MCF 10A (cell line): ENCODE measurements at regions of chr15 and their contacts with region 1.

Region 1: GRCh38 chr15:96392380-96393208 is 62.1 kb downstream of the NR2F2 start:
- DNase-seq: no peak
- H3K4me3 Mint-ChIP-seq: no peak overlapping the region
- H3K27ac Mint-ChIP-seq: no peak overlapping the region
- H3K4me1 Mint-ChIP-seq: no peaks in the 10 kb centered on the region
- H3K27me3 Mint-ChIP-seq: peaks cover 25% of the 10 kb centered on the region
- CTCF ChIP-seq: no peak

Region 2: GRCh38 chr15:96171853-96172296 is 220.7 kb before region 1 on chr15:
- CTCF ChIA-PET with region 1: no interaction called
- POLR2A ChIA-PET with region 1: no interaction called
- intact Hi-C with region 1: no loop called
- DNase-seq: no peak
- H3K4me3 Mint-ChIP-seq: no peak overlapping the region
- H3K27ac Mint-ChIP-seq: no peak overlapping the region
- H3K4me1 Mint-ChIP-seq: no peaks in the 10 kb centered on the region
- H3K27me3 Mint-ChIP-seq: no peaks in the 10 kb centered on the region
- CTCF ChIP-seq: no peak

Region 3: GRCh38 chr15:96381463-96381862 is 11.1 kb before region 1 on chr15:
- CTCF ChIA-PET with region 1: interaction called, 4 read pairs
- POLR2A ChIA-PET with region 1: interaction called, 3 read pairs
- intact Hi-C with region 1: loop called (anchors 1 kb)
- DNase-seq: no peak
- H3K4me3 Mint-ChIP-seq: no peak overlapping the region
- H3K27ac Mint-ChIP-seq: no peak overlapping the region
- H3K4me1 Mint-ChIP-seq: no peaks in the 10 kb centered on the region
- H3K27me3 Mint-ChIP-seq: peaks cover 24% of the 10 kb centered on the region
- CTCF ChIP-seq: no peak